Dorsolateral prefrontal cortex (tissue), 120 donors: ENCODE measurements at regions of chr9 and their contacts with region 1.

Region 1: GRCh38 chr9:95268681-95269080 is 48.8 kb downstream of the FANCC start:
- DNase-seq: peak in 1 of 10 donors; percentile 17
- H3K4me3 ChIP-seq: no peak overlapping the region
- H3K27ac ChIP-seq: no peak overlapping the region
- H3K27me3 ChIP-seq: no peaks in the 10 kb centered on the region
- CTCF ChIP-seq: peak in 52 of 56 donors; percentile 14 to 66 (median 44)

Region 2: GRCh38 chr9:95181226-95181818 is 87.4 kb before region 1 on chr9:
- intact Hi-C with region 1: loop called in 1 of 2 experiments (anchors 10 kb)
- DNase-seq: no peak
- H3K4me3 ChIP-seq: no peak overlapping the region
- H3K27ac ChIP-seq: no peak overlapping the region
- H3K27me3 ChIP-seq: no peaks in the 10 kb centered on the region
- CTCF ChIP-seq: peak in 55 of 56 donors; percentile 37 to 72 (median 56)